ENCODE measurements at regions of chr12 and their contacts with region 1.

Region 1: DNA sequence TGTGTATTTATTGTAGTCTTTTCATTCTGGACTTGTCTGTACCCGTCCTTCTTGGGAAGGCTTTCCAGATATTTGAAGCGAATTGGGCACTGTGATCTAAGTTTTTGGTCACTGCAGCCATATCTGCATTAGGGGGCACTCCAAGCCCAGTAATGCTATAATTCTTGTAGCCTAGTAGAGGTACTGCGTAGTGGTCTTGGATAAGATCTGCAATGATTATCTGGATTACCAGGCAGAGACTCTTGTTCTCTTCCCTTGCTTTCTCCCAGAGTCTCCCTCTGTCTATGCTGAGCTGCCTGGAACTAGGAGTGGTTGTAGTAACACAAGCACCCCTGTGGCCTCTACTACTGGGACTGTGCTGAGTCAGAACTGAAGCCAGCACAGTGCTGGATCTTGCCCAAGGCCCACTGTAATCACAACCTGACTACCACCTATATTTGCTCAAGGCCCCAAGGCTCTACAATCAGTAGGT is 30.0 kb downstream of the SLC38A2 start:
- DNase-seq: peak in 8 of 9 experiments; percentile 6 to 69 (median 38)
- ATAC-seq: peak; percentile 67
- H3K4me3 ChIP-seq: no peak overlapping the region
- H3K4me3 Mint-ChIP-seq: no peak overlapping the region
- H3K27ac ChIP-seq: no peak overlapping the region
- H3K27ac Mint-ChIP-seq: no peak overlapping the region
- H3K4me1 ChIP-seq: no peaks in the 10 kb centered on the region
- H3K4me1 Mint-ChIP-seq: no peaks in the 10 kb centered on the region
- H3K27me3 ChIP-seq: no peaks in the 10 kb centered on the region
- H3K27me3 Mint-ChIP-seq: peaks cover 2% of the 10 kb centered on the region
- CTCF ChIP-seq: peak; percentile 62

Region 2: GRCh38 chr12:46024099-46024498 is 318.5 kb before region 1 on chr12:
- CTCF ChIA-PET with region 1: no interaction called
- POLR2A ChIA-PET with region 1: no interaction called
- intact Hi-C with region 1: no loop called
- DNase-seq: no peak
- ATAC-seq: no peak
- H3K4me3 ChIP-seq: no peak overlapping the region
- H3K4me3 Mint-ChIP-seq: no peak overlapping the region
- H3K27ac ChIP-seq: no peak overlapping the region
- H3K27ac Mint-ChIP-seq: no peak overlapping the region
- H3K4me1 ChIP-seq: no peaks in the 10 kb centered on the region
- H3K4me1 Mint-ChIP-seq: no peaks in the 10 kb centered on the region
- H3K27me3 ChIP-seq: no peaks in the 10 kb centered on the region
- H3K27me3 Mint-ChIP-seq: peaks cover 7% of the 10 kb centered on the region
- CTCF ChIP-seq: no peak

Region 3: DNA sequence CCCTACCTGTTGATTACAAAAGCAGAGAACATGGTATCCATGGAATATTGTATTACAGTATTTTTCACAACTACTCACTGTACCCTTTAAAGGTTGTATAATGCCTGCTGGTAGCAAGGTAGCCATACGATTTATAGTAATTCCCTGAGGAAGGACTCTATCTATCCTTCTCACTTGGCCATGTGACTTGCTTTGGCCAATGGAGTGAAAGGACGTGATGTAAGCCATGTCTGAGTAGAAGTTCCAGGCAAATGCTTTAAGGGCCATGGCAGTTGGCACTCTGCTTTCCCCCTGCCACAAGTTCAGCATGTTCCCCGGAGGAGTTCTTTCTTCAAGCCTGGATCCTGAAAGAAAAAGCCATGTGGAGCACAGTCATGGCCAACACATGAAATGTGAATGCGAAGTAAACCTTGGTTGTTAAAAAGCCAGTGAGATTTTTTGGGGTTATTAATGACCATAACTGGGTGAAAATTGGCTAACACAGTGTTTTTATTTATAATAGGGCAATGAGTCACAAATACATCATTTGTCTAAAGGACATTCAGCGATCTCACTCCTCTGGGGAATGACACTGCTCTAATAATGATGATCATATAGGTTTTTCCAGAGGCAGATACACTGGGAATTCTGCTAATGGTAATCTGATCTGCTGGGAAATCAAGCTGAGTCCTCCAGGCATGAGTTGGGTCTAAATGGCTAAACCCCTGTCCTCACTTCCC is 97.4 kb after region 1 on chr12:
- CTCF ChIA-PET with region 1: no interaction called
- POLR2A ChIA-PET with region 1: no interaction called
- intact Hi-C with region 1: no loop called
- DNase-seq: no peak
- ATAC-seq: no peak
- H3K4me3 ChIP-seq: no peak overlapping the region
- H3K4me3 Mint-ChIP-seq: no peak overlapping the region
- H3K27ac ChIP-seq: no peak overlapping the region
- H3K27ac Mint-ChIP-seq: no peak overlapping the region
- H3K4me1 ChIP-seq: no peaks in the 10 kb centered on the region
- H3K4me1 Mint-ChIP-seq: no peaks in the 10 kb centered on the region
- H3K27me3 ChIP-seq: no peaks in the 10 kb centered on the region
- H3K27me3 Mint-ChIP-seq: no peaks in the 10 kb centered on the region
- CTCF ChIP-seq: no peak

Region 4: DNA sequence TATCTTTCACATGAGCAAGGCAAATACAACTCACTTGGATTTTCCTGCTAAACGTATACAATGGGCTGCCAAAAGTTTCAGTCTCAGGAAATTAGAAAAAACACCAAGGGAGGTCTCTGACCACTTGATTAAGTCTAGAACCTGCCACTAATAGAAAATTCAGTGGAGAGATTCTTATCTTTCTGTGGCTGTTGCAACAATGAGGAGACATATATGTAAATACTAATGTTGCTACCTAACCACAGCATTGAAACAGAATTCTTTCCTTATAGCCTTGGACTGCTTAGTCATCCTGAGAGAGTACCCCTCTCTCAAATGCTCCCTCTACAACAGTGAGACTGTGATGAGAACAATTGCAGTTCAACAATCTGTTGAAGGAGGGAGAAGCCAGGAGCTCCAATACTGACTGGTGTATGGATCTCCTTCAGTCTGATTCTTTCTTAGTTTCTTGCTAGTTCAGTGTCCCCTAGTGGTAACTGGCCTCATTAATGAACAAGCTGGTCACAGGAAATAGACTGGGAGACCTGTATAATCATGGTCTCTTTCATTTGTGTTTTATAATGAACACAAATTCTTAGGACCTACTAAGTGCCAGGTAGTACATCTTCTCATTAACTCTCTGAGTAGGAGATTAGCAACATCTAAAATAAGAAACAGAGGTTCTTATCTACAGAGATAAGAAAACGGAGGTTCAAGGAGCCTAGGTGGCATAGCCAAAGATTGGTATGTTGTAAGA is 318.7 kb after region 1 on chr12:
- CTCF ChIA-PET with region 1: no interaction called
- POLR2A ChIA-PET with region 1: no interaction called
- intact Hi-C with region 1: loop called (anchors 1 to 5 kb)
- DNase-seq: peak in 2 of 9 experiments; percentile 60 to 72
- ATAC-seq: peak; percentile 69
- H3K4me3 ChIP-seq: no peak overlapping the region
- H3K4me3 Mint-ChIP-seq: no peak overlapping the region
- H3K27ac ChIP-seq: no peak overlapping the region
- H3K27ac Mint-ChIP-seq: no peak overlapping the region
- H3K4me1 ChIP-seq: peaks cover 6% of the 10 kb centered on the region
- H3K4me1 Mint-ChIP-seq: peaks cover 28% of the 10 kb centered on the region
- H3K27me3 ChIP-seq: no peaks in the 10 kb centered on the region
- H3K27me3 Mint-ChIP-seq: no peaks in the 10 kb centered on the region
- CTCF ChIP-seq: peak; percentile 61

Region 5: DNA sequence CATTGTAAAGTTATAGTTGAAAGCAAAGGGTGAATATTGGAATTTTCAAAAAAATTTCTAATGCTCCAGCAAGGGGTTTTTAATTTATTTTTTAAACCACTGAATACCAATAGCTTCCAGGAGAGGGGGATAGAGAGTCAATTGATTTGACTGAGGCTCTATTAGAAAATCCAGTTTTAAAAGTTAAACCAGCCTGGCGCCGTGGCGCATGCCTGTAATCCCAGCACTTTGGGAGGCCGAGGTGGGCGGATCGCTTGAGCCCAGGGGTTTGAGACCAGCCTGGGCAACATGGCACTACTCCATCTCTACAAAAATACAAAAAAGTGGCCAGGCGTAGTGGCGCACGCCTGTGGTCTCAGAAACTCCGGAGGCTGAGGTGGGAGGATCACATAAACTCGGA is 333.1 kb after region 1 on chr12:
- CTCF ChIA-PET with region 1: interaction called, 6 read pairs
- POLR2A ChIA-PET with region 1: no interaction called
- intact Hi-C with region 1: loop called (anchors 1 to 5 kb)
- DNase-seq: peak in 2 of 9 experiments; percentile 31 to 40
- ATAC-seq: no peak
- H3K4me3 ChIP-seq: no peak overlapping the region
- H3K4me3 Mint-ChIP-seq: no peak overlapping the region
- H3K27ac ChIP-seq: no peak overlapping the region
- H3K27ac Mint-ChIP-seq: no peak overlapping the region
- H3K4me1 ChIP-seq: no peaks in the 10 kb centered on the region
- H3K4me1 Mint-ChIP-seq: no peaks in the 10 kb centered on the region
- H3K27me3 ChIP-seq: no peaks in the 10 kb centered on the region
- H3K27me3 Mint-ChIP-seq: no peaks in the 10 kb centered on the region
- CTCF ChIP-seq: peak; percentile 72

Region 6: GRCh38 chr12:46933947-46934346 is 591.3 kb after region 1 on chr12:
- CTCF ChIA-PET with region 1: interaction called, 4 read pairs
- POLR2A ChIA-PET with region 1: no interaction called
- intact Hi-C with region 1: loop called (anchors 1 to 2 kb)
- DNase-seq: peak in 2 of 9 experiments; percentile 14 to 43
- ATAC-seq: no peak
- H3K4me3 ChIP-seq: no peak overlapping the region
- H3K4me3 Mint-ChIP-seq: no peak overlapping the region
- H3K27ac ChIP-seq: no peak overlapping the region
- H3K27ac Mint-ChIP-seq: no peak overlapping the region
- H3K4me1 ChIP-seq: no peaks in the 10 kb centered on the region
- H3K4me1 Mint-ChIP-seq: no peaks in the 10 kb centered on the region
- H3K27me3 ChIP-seq: no peaks in the 10 kb centered on the region
- H3K27me3 Mint-ChIP-seq: peaks cover 16% of the 10 kb centered on the region
- CTCF ChIP-seq: peak; percentile 20

Region 7: GRCh38 chr12:46983393-46984266 is 641.0 kb after region 1 on chr12:
- CTCF ChIA-PET with region 1: interaction called, 3 read pairs
- POLR2A ChIA-PET with region 1: no interaction called
- intact Hi-C with region 1: loop called in 1 of 2 experiments (anchors 1 kb)
- DNase-seq: peak in 7 of 9 experiments; percentile 9 to 59 (median 30)
- ATAC-seq: peak; percentile 69
- H3K4me3 ChIP-seq: no peak overlapping the region
- H3K4me3 Mint-ChIP-seq: no peak overlapping the region
- H3K27ac ChIP-seq: no peak overlapping the region
- H3K27ac Mint-ChIP-seq: no peak overlapping the region
- H3K4me1 ChIP-seq: peaks cover 6% of the 10 kb centered on the region
- H3K4me1 Mint-ChIP-seq: peaks cover 8% of the 10 kb centered on the region
- H3K27me3 ChIP-seq: no peaks in the 10 kb centered on the region
- H3K27me3 Mint-ChIP-seq: peaks cover 20% of the 10 kb centered on the region
- CTCF ChIP-seq: peak; percentile 63

Region 8: DNA sequence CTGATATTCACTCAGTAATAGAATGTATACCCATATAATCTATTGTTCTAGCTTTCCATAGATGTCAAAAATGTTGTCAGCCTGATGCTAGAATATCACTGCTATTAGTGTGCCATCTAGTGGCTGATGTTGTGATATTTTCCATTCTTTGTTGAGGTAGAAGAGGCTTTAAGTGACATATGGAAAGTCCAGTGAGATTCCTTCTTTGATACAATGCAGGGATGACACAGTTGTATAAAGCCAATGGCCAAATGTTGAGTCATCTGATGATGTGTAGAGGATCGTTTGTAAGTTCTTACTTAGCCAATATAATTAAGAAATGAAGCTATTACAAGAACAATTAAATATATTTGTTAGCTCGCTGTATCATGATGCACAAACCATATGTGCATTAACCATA is 678.7 kb after region 1 on chr12:
- CTCF ChIA-PET with region 1: interaction called, 22 read pairs
- POLR2A ChIA-PET with region 1: no interaction called
- intact Hi-C with region 1: loop called (anchors 1 kb)
- DNase-seq: peak in 3 of 9 experiments; percentile 11 to 70 (median 58)
- ATAC-seq: no peak
- H3K4me3 ChIP-seq: no peak overlapping the region
- H3K4me3 Mint-ChIP-seq: no peak overlapping the region
- H3K27ac ChIP-seq: no peak overlapping the region
- H3K27ac Mint-ChIP-seq: no peak overlapping the region
- H3K4me1 ChIP-seq: no peaks in the 10 kb centered on the region
- H3K4me1 Mint-ChIP-seq: no peaks in the 10 kb centered on the region
- H3K27me3 ChIP-seq: no peaks in the 10 kb centered on the region
- H3K27me3 Mint-ChIP-seq: peaks cover 16% of the 10 kb centered on the region
- CTCF ChIP-seq: peak; percentile 75

Region 9: DNA sequence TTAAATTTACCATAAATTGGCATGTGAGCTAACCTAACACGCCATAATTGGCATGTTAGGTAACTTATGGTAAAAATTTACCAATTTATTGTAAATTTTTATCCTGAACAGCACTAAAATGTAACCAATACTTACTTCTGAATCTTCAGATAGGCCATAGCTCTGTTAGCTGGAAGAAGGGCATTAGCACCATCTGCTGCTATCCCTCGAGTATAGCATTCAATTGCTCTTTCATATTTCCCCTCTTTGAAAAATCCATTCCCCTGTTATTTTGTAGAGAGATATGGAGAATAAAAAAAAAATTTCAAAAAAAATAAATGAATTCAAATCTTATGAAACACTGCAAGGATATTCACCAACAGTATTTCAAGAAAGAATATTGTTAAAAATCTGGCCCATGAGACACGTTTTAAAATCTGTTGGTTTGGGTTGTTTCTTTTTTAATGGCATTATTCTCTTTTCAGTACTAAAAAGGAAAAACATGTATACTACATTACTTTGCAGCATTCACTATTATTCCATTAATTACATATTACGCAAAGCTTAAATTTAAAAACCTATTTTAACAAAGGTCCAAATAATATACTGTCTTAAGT is 1344.1 kb after region 1 on chr12:
- CTCF ChIA-PET with region 1: no interaction called
- POLR2A ChIA-PET with region 1: no interaction called
- intact Hi-C with region 1: loop called (anchors 2 to 5 kb)
- DNase-seq: peak in 3 of 9 experiments; percentile 21 to 61 (median 42)
- ATAC-seq: peak; percentile 66
- H3K4me3 ChIP-seq: no peak overlapping the region
- H3K4me3 Mint-ChIP-seq: no peak overlapping the region
- H3K27ac ChIP-seq: no peak overlapping the region
- H3K27ac Mint-ChIP-seq: no peak overlapping the region
- H3K4me1 ChIP-seq: no peaks in the 10 kb centered on the region
- H3K4me1 Mint-ChIP-seq: peaks cover 16% of the 10 kb centered on the region
- H3K27me3 ChIP-seq: no peaks in the 10 kb centered on the region
- H3K27me3 Mint-ChIP-seq: no peaks in the 10 kb centered on the region
- CTCF ChIP-seq: peak; percentile 76